ENCODE measurements at regions of chr7 and their contacts with region 1.

Region 1: GRCh38 chr7:106056513-106057203 is 55.5 kb downstream of the SYPL1 start:
- DNase-seq: peak; percentile 57
- H3K4me3 Mint-ChIP-seq: no peak overlapping the region
- H3K27ac Mint-ChIP-seq: no peak overlapping the region
- H3K4me1 Mint-ChIP-seq: peaks cover 19% of the 10 kb centered on the region
- H3K27me3 Mint-ChIP-seq: peaks cover 14% of the 10 kb centered on the region

Region 2: DNA sequence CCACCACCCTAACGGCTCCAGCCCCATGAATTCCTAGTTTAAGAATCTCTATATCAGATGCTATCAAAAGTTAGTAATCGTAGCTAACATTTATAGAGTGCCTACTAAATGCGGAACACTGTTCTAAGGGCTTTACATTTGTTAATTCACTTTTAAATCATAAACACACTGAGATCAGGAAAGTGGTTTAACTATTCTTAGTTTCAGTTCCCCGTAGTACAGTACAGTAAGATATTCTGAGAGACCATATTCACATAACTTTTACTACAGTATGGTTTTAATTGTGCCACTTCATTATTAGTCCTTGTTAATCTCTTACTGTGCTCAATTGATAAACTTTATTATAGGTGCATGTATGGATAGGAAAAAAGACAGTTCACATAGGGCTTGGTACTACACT is 33.0 kb after region 1 on chr7:
- intact Hi-C with region 1: no loop called
- DNase-seq: no peak
- H3K4me3 Mint-ChIP-seq: no peak overlapping the region
- H3K27ac Mint-ChIP-seq: no peak overlapping the region
- H3K4me1 Mint-ChIP-seq: peaks cover 19% of the 10 kb centered on the region
- H3K27me3 Mint-ChIP-seq: no peaks in the 10 kb centered on the region

Region 3: DNA sequence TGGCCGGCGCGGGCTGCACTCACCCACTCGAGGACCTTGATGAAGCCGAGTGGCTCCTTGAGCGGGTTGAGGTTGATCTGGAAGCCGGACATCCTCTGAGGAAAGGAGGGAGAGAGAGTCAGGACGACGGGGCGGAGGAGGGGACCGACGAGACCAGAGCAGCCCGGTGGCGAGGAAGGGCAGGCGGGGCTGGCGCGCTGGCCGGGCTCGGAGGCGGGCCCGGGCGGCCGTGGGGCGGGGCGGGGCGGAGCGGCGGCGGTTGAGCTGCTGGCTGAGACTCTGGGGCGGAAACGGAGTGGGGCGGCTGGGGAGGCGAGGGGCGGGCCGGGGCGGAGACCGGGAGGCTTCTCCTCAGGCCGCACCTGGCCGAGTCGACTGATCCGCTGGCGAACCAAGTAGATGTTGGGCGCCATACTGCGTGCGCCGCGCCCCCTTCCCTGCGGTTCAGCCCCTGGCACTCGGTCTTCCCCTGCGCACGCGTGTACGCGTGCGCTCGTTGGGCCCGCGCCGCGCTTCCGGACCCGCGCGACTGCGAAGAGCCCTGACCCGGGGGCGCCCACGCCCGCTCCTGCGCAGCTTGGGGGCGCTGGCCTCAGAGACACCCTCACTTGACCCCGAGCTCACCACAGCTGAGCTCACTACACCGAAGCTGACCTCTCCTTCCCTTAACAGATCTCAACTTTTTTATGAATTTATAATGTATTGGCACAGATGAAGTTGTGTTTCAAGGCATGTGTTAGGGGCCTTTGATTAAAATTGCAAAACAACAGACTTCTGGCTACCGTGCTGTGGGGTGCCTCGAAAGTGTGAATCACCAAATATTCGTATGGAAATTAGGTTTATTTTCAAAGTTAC is 55.7 kb after region 1 on chr7 and contains the start of gene SYPL1:
- intact Hi-C with region 1: loop called (anchors 5 kb)
- DNase-seq: peak; percentile 89
- H3K4me3 Mint-ChIP-seq: peak within 1 kb of the TSS; percentile 83
- H3K27ac Mint-ChIP-seq: peak within 1 kb of the TSS; percentile 92
- H3K4me1 Mint-ChIP-seq: peaks cover 54% of the 10 kb centered on the region
- H3K27me3 Mint-ChIP-seq: no peaks in the 10 kb centered on the region
- total RNA-seq, gene SYPL1: 38.2 and 40.9 TPM in 2 replicates

Region 4: GRCh38 chr7:106153891-106154449 is 97.3 kb after region 1 on chr7:
- intact Hi-C with region 1: loop called (anchors 1 kb)
- DNase-seq: peak; percentile 55
- H3K4me3 Mint-ChIP-seq: no peak overlapping the region
- H3K27ac Mint-ChIP-seq: no peak overlapping the region
- H3K4me1 Mint-ChIP-seq: peaks cover 9% of the 10 kb centered on the region
- H3K27me3 Mint-ChIP-seq: peaks cover 30% of the 10 kb centered on the region